Aorta (tissue), 5 donors: ENCODE measurements at regions of chr20 and their contacts with region 1.

Region 1: GRCh38 chr20:18287915-18288748 is at the start of gene ZNF133:
- DNase-seq: peak; percentile 97 to 99
- ATAC-seq: peak; percentile 99
- H3K4me3 ChIP-seq: peak within 1 kb of the TSS; percentile 64 to 65
- H3K27ac ChIP-seq: peak within 1 kb of the TSS; percentile 37 to 51
- H3K4me1 ChIP-seq: peaks cover 2 to 5% of the 10 kb centered on the region in 2 donors
- H3K27me3 ChIP-seq: no peaks in the 10 kb centered on the region
- total RNA-seq, gene ZNF133: 11.9 to 19.0 TPM

Region 2: GRCh38 chr20:18137412-18138265 is 150.5 kb before region 1 on chr20 and contains the starts of genes KAT14 and PET117:
- intact Hi-C with region 1: loop called (anchors 5 to 10 kb)
- DNase-seq: peak; percentile 95 to 97
- ATAC-seq: peak; percentile 99
- H3K4me3 ChIP-seq: peak within 1 kb of the TSS; percentile 88 to 100
- H3K27ac ChIP-seq: peak within 1 kb of the TSS in 1 of 2 donors; percentile 61
- H3K4me1 ChIP-seq: peaks cover 0 to 12% of the 10 kb centered on the region in 2 donors
- H3K27me3 ChIP-seq: no peaks in the 10 kb centered on the region
- total RNA-seq, gene KAT14: 8.3 to 11.8 TPM
- total RNA-seq, gene PET117: 8.0 to 10.6 TPM